Vagina (tissue), 2 donors: ENCODE measurements at regions of chr18 and their contacts with region 1.

Region 1: GRCh38 chr18:72965611-72966010 is 97.8 kb upstream of the NETO1 start:
- DNase-seq: no peak
- H3K4me3 ChIP-seq: no peak overlapping the region
- H3K27ac ChIP-seq: no peak overlapping the region
- H3K4me1 ChIP-seq: no peaks in the 10 kb centered on the region
- H3K27me3 ChIP-seq: no peaks in the 10 kb centered on the region
- CTCF ChIP-seq: no peak
- POLR2A ChIP-seq: no peak

Region 2: DNA sequence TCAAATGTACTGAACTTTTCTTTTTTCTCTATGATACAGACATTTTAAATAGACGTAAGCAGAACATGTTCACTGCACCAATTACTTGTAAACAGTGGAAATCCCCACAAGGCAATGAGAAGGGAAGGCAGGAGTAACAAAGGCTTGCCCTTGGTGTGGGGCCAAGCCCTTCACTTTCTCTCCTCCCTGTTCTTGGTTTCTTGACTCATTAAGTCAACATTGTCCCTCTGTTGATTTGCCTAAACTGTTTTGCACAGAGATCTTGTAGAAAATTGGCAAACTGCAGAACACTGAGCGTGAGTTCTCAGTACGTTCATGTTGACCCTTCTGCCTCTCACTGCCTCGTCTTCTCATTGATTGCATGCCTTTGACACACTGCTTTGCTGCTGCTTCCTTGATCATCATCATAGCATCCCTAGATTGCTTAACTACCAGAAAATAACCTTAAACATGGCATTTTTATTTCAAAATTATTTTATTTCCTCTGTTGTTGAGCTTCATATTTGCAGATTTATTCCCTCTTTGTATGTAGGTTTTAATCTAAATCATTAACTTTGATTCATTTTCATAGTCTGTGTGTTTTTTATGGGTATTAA is 1985.7 kb after region 1 on chr18:
- intact Hi-C with region 1: loop called (anchors 10 kb)
- DNase-seq: no peak
- H3K4me3 ChIP-seq: no peak overlapping the region
- H3K27ac ChIP-seq: no peak overlapping the region
- H3K4me1 ChIP-seq: peaks cover 15% of the 10 kb centered on the region
- H3K27me3 ChIP-seq: no peaks in the 10 kb centered on the region
- CTCF ChIP-seq: no peak
- POLR2A ChIP-seq: no peak